Activated CD8-positive, alpha-beta T cell treated with anti-CD3 and anti-CD28 coated beads for 36 hours (primary cell): ENCODE measurements at regions of chr4 and their contacts with region 1.

Region 1: DNA sequence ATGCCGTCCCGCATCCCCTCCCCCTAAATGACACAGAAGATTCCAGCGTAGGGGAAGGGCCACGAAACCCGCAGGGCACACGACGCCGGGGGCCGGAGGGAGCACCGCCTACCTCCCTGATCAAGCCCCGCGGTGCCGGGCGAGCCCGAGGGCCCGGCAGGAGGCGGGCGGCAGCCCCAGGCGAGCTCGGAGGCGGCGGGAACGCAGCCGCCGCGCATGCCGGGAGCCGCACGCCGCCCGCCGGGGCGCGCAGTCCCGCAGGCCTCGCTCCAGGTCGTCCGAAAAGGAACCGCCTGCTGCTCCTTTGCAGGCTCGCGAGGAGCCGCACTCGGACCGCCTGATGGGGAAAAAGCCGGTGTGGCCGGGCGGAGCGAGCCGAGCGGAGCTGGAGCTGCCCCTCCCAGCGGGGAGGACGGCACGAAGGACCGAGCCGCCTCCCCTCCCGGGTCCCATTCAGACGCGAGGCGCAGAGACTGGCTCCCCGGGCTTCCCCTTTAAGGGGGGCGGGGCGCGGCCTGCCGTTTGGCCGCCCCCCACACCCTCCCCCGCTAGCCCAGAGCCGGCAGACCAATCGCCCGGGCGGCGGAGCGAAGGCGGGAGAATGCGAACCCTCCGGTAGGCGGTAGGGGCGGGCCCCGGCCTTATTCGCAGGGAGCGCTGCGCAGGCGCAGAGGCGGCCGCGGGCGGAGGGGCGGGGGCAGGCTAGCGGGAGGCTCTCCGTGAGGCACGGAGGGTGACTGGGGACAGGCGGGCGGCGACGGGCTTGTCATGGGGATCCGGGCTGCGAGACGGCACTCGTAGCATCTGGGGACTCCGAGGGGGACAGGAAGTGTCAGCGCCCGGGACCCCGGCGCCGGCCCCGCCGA is 561 bp upstream of the ING2 start:
- DNase-seq: peak; percentile 99
- ATAC-seq: peak; percentile 82
- H3K4me3 Mint-ChIP-seq: peak overlapping the region; percentile 93
- H3K27ac Mint-ChIP-seq: peak overlapping the region; percentile 93
- H3K4me1 Mint-ChIP-seq: peaks cover 36% of the 10 kb centered on the region
- H3K27me3 Mint-ChIP-seq: no peaks in the 10 kb centered on the region
- CTCF ChIP-seq: no peak

Region 2: GRCh38 chr4:183659029-183659871 is 155.0 kb after region 1 on chr4 and contains the starts of genes RWDD4 and TRAPPC11:
- CTCF ChIA-PET with region 1: no interaction called
- POLR2A ChIA-PET with region 1: no interaction called
- intact Hi-C with region 1: loop called (anchors 10 kb)
- DNase-seq: peak; percentile 98
- ATAC-seq: peak; percentile 99
- H3K4me3 Mint-ChIP-seq: peak within 1 kb of the TSS; percentile 85
- H3K27ac Mint-ChIP-seq: peak within 1 kb of the TSS; percentile 95
- H3K4me1 Mint-ChIP-seq: peaks cover 38% of the 10 kb centered on the region
- H3K27me3 Mint-ChIP-seq: no peaks in the 10 kb centered on the region
- CTCF ChIP-seq: no peak
- total RNA-seq, gene RWDD4: 19.4 to 20.9 TPM
- total RNA-seq, gene TRAPPC11: 28.5 to 32.2 TPM